HCT116 (cell line): ENCODE measurements at regions of chr5 and their contacts with region 1.

Region 1: GRCh38 chr5:67149951-67150523 is 46.6 kb downstream of the CD180 start:
- DNase-seq: no peak
- ATAC-seq: no peak
- H3K4me3 ChIP-seq: no peak overlapping the region
- H3K27ac ChIP-seq: no peak overlapping the region
- H3K4me1 ChIP-seq: no peaks in the 10 kb centered on the region
- H3K27me3 ChIP-seq: peaks cover 45% of the 10 kb centered on the region
- CTCF ChIP-seq: peak; percentile 11 to 39 (median 39); a peak in 3 of 6 replicates
- POLR2A ChIP-seq: no peak
- RAD21 ChIP-seq: peak; percentile 66

Region 2: DNA sequence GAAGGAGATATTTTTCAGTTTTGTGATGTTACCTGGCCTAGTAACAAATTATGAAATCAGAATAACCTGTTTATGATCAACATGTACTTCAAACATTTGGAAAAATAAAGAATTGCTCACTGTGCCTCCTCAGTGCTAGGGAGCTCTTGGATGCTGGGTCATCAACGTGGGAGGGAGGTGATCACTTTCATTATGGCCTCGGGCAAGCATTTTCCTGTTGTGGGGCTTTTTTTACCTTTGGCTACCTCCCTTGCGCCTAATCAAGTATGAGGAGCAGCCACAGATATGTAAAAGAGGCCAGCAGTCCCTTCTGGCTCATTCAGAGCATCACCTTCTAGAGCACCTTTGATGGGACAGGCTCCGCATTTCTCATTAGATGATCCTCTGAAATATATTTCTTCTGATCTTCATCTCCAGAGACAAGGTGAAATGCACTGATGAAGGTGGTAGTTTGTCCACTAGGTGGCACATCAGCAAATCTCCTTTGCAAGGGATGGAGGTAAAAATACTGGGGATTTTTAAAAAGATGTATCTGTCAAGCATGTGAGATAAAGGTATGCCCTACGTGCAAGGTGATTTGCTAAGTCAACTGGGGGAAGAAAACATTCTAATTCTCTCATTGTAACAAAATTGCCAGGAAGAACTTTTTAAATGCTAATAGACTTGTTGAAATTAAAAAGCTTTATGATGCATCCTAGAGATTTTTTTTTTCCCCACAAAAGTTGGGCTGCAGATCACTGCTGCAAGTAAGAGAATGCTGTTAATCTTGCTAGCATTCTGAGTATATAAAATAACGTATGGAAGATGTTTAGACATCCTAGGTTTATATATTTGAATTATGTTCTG is 335.7 kb before region 1 on chr5:
- CTCF ChIA-PET with region 1: interaction called, 4 read pairs
- POLR2A ChIA-PET with region 1: no interaction called
- RAD21 ChIA-PET with region 1: no interaction called
- intact Hi-C with region 1: loop called (anchors 2 kb)
- DNase-seq: peak; percentile 28
- ATAC-seq: peak; percentile 73
- H3K4me3 ChIP-seq: no peak overlapping the region
- H3K27ac ChIP-seq: no peak overlapping the region
- H3K4me1 ChIP-seq: no peaks in the 10 kb centered on the region
- H3K27me3 ChIP-seq: peaks cover 61% of the 10 kb centered on the region
- CTCF ChIP-seq: peak; percentile 43 to 68 (median 64); a peak in 5 of 6 replicates
- POLR2A ChIP-seq: no peak
- RAD21 ChIP-seq: peak; percentile 53

Region 3: DNA sequence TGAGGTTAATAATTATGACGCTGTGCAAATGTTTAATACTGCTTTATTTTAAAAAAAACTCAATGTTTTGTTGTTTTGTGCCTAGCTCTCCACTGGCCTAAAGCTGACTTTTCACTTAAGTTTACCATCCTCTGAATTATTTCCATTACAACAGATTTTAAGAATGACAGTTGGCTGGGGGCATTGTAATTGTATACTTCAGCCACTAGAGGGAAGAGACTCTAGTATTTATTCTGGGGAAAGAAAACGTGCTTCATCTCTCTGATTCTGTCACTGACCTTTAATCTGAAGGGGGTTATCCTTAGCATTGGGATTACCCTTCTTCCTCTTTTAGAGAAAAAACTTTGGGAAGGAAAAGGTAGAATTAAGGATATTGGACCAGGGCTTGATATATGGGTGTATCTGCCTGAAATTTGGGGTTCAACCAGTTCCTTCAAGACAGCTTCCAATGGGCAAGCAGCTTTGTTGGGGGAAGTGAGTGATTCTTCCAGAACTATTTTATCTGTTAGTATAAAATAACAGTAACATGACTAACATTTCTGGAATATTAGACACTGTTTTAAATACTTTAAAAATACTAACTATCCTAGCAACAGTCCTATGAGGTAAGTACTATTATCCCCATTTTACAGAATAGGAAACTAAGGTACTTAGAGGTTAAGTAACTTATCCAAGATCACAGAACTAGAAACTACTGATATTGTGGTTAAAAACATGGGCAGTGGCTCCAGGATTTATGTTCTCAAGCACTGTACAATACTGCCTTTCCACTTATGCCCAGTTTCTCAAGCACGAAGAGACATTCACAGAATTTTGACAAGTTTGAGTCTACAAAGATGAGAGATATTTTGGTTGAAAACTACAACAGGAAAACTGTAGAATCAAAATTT is 161.8 kb before region 1 on chr5:
- CTCF ChIA-PET with region 1: interaction called, 3 read pairs
- POLR2A ChIA-PET with region 1: no interaction called
- RAD21 ChIA-PET with region 1: no interaction called
- intact Hi-C with region 1: loop called (anchors 2 kb)
- DNase-seq: no peak
- ATAC-seq: peak; percentile 70; the same call in 1 of the 2 replicates
- H3K4me3 ChIP-seq: no peak overlapping the region
- H3K27ac ChIP-seq: no peak overlapping the region
- H3K4me1 ChIP-seq: no peaks in the 10 kb centered on the region
- H3K27me3 ChIP-seq: peaks cover 50% of the 10 kb centered on the region
- CTCF ChIP-seq: peak; percentile 26 to 84 (median 75); a peak in 5 of 6 replicates
- POLR2A ChIP-seq: no peak
- RAD21 ChIP-seq: peak; percentile 38; the same call in 1 of the 2 replicates

Region 4: GRCh38 chr5:67215583-67216471 is 65.8 kb after region 1 on chr5:
- CTCF ChIA-PET with region 1: no interaction called
- POLR2A ChIA-PET with region 1: no interaction called
- RAD21 ChIA-PET with region 1: no interaction called
- intact Hi-C with region 1: no loop called
- DNase-seq: no peak
- ATAC-seq: no peak
- H3K4me3 ChIP-seq: no peak overlapping the region
- H3K27ac ChIP-seq: no peak overlapping the region
- H3K4me1 ChIP-seq: peaks cover 0 to 7% of the 10 kb centered on the region in 2 experiments; a peak in 1 of 4 replicates
- H3K27me3 ChIP-seq: no peaks in the 10 kb centered on the region
- CTCF ChIP-seq: no peak
- POLR2A ChIP-seq: no peak
- RAD21 ChIP-seq: no peak